ENCODE measurements at regions of chr1 and their contacts with region 1.

Region 1: DNA sequence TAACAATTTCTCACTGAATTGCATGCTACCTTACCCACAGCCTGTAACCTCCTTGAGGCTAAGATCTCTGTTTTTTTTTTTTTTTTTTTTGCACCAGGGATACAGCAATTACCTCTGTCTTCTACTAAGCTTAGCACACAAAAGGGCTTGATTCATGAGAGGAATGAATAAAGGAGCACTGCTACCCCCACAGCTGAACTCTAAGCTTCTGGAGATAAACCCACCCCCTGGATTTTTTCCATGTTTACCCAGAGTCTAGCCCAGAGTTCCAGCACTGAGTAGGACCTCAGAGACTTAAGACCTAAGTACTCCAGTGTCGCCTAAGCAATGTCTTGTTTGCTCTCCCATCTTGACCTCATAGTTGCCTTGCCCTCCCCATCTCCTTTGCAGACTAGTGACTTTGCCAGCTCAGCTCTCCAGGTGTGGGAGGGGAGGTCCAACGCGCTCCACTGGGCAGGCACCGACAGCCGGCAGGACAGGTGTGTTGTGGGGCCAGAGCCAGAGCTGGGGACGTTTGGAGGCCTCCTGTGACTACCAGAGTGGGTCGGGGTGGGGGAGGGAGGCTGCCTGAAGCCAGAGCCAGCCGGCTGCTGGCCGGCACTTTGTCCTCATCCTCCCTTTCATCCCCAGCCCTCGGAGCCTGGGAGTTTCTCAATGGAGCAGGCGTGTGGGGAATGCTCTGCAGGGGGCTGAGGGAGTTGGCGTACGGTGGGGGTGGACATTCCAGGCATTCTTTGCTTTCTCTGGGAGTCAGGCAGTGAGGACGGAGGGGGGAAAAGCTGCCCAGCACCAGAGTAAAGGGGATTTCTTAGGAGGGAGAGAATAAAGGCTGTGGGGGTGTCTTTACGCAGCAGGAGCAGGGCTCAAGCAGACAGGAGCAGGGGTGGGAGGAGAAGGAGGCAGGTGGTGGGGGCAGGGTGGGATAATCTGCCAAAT is 20.4 kb downstream of the NUAK2 start:
- DNase-seq: peak; percentile 84
- H3K27ac ChIP-seq: peak overlapping the region; percentile 85
- CTCF ChIP-seq: no peak

Region 2: DNA sequence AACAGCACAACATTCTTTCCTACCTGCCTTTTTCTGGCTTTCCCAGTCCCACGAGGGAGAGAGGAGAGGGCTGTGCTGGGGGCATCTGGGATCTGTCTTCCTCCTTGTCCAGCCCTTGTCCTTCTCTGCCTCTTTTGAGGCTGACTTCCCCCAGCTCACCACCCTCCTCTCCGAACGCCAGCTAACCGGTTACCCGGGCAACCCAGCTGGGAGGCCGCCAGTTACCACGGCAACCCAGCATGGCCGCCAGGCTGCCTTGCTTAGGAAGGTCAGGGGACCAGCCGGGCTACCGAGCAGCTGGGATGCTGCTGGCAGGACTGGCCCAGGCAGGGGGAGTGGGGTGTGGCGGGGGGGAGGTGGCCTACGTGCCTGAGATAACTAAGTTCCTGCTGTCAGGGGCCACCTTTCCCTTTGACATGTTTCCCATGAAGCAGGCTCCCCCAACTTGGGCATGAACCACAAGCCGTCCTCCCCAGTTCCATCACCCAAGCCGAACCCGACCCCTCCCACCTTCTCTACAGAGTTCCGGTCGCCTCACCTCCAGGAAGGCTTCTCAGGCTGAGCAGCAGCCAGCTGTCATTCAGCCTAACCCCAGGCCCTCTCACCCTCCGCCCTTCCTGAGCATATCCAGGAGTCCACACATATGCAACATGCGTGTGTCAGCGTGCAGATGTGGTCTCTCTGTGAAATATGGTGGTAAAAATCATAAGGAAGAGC is 950.1 kb before region 1 on chr1:
- CTCF ChIA-PET with region 1: no interaction called
- POLR2A ChIA-PET with region 1: interaction called, 14 read pairs
- DNase-seq: no peak
- H3K27ac ChIP-seq: no peak overlapping the region
- CTCF ChIP-seq: no peak

Region 3: GRCh38 chr1:205263580-205264190 is 37.5 kb before region 1 on chr1:
- CTCF ChIA-PET with region 1: no interaction called
- POLR2A ChIA-PET with region 1: no interaction called
- DNase-seq: no peak
- H3K27ac ChIP-seq: peak overlapping the region; percentile 23
- CTCF ChIP-seq: no peak